ENCODE measurements at regions of chr10 and their contacts with region 1.

Region 1: GRCh38 chr10:94362360-94363250 is at the start of gene NOC3L:
- H3K4me3 Mint-ChIP-seq: peak within 1 kb of the TSS; percentile 84
- H3K27ac Mint-ChIP-seq: peak within 1 kb of the TSS; percentile 83
- H3K4me1 Mint-ChIP-seq: peaks cover 10% of the 10 kb centered on the region
- H3K27me3 Mint-ChIP-seq: peaks cover 23% of the 10 kb centered on the region

Region 2: DNA sequence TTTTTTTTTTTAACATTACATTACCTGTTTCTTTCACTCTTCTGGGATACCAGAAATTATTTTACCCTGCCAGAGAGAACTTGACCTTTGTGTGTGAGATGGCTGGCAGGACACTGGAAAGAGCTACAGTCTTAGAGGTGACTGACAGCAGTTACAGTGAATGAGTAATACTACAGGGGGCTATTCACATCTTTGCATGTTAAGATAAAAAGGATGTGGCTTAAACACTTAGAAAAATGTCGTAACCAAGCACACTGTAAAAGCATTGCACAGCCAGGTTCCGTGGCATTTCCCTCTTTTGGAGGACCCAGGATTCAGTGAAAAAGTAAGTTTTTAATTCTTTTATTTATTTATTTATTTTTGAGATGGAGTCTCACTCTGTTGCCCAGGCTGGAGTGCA is 20.9 kb after region 1 on chr10:
- intact Hi-C with region 1: loop called (anchors 1 kb)
- H3K4me3 Mint-ChIP-seq: no peak overlapping the region
- H3K27ac Mint-ChIP-seq: peak overlapping the region; percentile 34
- H3K4me1 Mint-ChIP-seq: peaks cover 38% of the 10 kb centered on the region
- H3K27me3 Mint-ChIP-seq: peaks cover 4% of the 10 kb centered on the region

Region 3: DNA sequence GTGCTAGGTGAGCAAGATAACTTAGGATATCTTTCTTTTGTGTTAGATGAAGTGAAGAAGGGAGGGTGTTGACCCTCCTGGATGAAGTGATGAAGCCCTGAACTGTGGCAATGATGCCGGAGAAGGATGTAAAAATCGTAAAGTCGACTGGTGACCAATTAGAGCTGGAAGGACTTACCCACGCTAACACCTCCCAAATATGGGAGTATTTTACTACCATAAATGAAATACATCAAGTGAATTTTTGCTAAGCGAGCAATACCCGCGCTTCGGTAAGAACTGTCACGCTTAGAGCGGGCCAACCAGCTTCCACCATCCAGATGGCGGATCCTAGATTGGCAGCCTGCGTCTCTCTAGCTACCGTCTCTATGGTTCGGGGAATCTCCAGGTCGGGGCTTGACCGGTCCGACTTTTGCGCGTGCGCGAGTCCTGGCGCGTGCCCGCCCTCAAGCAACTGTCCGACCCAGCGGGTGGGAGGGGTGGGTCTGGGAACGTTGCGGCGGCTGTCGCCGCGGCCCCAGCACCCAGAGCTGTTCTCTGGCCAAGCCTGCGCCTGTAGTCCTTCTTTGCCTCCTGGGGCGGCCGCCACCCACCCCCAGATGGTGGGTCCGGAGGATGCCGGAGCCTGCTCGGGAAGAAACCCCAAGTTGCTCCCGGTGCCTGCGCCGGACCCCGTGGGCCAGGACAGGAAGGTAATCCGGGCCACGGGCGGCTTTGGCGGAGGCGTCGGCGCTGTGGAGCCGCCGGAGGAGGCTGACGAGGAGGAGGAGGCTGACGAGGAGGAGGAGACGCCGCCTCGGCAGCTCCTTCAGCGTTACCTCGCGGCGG is 39.6 kb after region 1 on chr10 and contains the start of gene TBC1D12:
- intact Hi-C with region 1: loop called (anchors 1 kb)
- H3K4me3 Mint-ChIP-seq: peak within 1 kb of the TSS; percentile 79
- H3K27ac Mint-ChIP-seq: peak within 1 kb of the TSS; percentile 91
- H3K4me1 Mint-ChIP-seq: peaks cover 32% of the 10 kb centered on the region
- H3K27me3 Mint-ChIP-seq: peaks cover 36% of the 10 kb centered on the region

Region 4: DNA sequence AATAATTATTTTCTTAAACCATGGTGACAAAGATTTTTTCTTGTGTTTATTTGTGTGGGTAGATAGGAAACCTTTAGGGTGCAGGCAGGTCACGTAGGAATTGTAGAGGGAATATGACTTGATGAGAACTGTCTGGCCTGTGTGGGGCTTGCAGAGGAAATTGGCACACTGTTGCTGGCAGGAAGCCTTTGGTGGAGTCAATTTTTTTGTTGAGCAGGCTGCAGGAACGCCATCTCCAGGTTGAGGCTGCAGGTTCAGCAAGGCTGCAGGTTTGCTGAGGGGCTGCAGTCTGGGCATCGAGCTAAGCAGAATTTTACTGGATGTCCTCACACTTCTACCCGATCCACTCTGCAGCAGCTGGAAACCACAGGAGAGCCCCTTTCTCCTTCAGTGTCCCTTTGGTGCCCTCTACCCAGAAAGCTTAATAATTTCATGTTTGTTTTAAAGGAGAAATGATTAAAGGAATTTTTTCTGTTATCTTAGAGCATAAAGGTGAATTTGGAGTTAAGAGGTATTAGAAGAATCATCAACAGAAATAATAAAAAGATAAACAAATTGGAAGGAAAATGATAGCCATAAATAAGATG is 76.8 kb after region 1 on chr10:
- intact Hi-C with region 1: loop called (anchors 1 kb)
- H3K4me3 Mint-ChIP-seq: no peak overlapping the region
- H3K27ac Mint-ChIP-seq: no peak overlapping the region
- H3K4me1 Mint-ChIP-seq: peaks cover 8% of the 10 kb centered on the region
- H3K27me3 Mint-ChIP-seq: no peaks in the 10 kb centered on the region

Region 5: GRCh38 chr10:94545391-94546048 is 182.9 kb after region 1 on chr10 and contains the start of gene HELLS:
- intact Hi-C with region 1: loop called (anchors 5 kb)
- H3K4me3 Mint-ChIP-seq: peak within 1 kb of the TSS; percentile 95
- H3K27ac Mint-ChIP-seq: peak within 1 kb of the TSS; percentile 78
- H3K4me1 Mint-ChIP-seq: peaks cover 26% of the 10 kb centered on the region
- H3K27me3 Mint-ChIP-seq: peaks cover 9% of the 10 kb centered on the region